Activated naive CD4-positive, alpha-beta T cell treated with anti-CD3 and anti-CD28 coated beads, Interleukin-2, amount 10 ng/mL, durations not matched to agents 7 days and 5 days (primary cell): ENCODE measurements at regions of chr20 and their contacts with region 1.

Region 1: DNA sequence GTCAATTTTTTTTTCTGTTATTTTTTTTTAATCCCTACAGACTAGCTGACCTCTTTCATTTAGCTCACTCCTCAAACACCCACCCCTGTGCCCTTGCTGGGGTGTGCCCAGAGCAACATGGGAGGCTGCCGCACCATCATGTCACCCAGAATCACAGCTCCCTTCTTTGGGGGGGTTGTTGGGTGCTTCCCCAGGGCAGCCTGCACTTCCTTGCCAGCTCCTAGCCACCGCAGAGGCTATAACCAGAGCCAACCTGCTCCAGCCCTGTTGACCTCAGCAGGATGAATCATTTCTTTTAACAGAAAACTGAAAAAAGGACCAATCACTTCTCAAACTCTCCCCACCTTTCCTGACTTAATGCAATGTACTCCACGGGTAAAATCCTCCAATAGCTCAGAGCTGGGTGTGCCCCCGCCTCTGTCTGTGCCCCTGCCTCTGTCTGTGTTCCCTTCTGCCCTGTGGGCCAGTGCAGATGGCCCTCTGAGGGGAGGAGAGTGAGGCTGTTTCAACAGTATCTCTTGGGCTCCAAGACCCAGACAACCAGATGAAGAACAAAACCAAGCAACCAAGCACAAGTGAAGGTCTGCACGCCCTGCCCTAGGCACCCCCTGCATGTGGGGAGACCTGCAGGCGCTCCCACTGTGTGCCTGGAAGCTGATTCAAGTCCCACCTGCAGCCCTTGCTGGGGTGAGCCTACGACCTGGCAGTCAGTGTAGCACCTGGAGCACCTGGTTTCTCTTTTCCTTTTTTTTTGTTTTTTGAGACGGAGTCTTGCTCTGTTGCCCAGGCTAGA is 67.7 kb downstream of the PYGB start:
- DNase-seq: no peak
- H3K4me3 Mint-ChIP-seq: no peak overlapping the region
- H3K27ac Mint-ChIP-seq: no peak overlapping the region
- H3K4me1 Mint-ChIP-seq: peaks cover 35% of the 10 kb centered on the region
- H3K27me3 Mint-ChIP-seq: no peaks in the 10 kb centered on the region

Region 2: GRCh38 chr20:25081065-25081729 is 234.4 kb before region 1 on chr20:
- CTCF ChIA-PET with region 1: no interaction called
- DNase-seq: peak; percentile 73
- H3K4me3 Mint-ChIP-seq: no peak overlapping the region
- H3K27ac Mint-ChIP-seq: no peak overlapping the region
- H3K4me1 Mint-ChIP-seq: peaks cover 16% of the 10 kb centered on the region
- H3K27me3 Mint-ChIP-seq: peaks cover 96% of the 10 kb centered on the region

Region 3: DNA sequence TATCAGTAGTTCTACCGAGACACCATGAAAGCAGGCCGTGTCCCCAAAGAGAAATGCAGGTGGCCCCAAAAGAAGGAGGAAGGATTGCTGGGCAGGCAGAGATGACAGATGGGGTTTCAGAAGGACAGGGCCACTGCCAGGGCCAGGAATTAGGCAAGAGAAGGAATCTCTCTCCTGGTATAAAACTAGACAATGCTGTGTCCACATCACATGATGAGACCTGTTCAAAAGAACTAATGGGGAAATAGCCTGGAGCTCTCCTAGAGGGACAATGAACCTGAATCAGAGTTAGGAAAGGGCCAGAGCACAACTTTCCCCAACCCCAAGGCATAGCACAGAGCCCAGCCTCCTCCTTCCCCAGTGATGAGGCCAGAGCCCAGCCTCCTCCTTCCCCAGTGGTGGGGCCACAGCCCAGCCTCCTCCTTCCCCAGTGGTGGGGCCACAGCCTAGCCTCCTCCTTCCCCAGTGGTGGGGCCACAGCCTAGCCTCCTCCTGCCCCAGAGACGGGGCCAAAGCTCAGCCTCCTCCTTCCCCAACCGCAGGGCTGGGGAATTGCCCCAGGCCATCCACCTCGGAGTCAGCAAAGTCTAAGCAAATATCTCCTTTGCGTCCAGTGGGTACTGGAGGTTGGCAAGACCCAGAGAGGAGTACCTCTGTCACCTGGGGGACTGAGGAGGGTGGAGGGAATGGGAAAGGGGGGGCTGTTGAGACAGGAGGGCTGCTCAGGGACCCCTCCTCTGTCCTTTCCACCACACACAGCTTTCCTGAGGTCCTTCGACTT is 211.9 kb before region 1 on chr20:
- CTCF ChIA-PET with region 1: no interaction called
- DNase-seq: no peak
- H3K4me3 Mint-ChIP-seq: no peak overlapping the region
- H3K27ac Mint-ChIP-seq: no peak overlapping the region
- H3K4me1 Mint-ChIP-seq: no peaks in the 10 kb centered on the region
- H3K27me3 Mint-ChIP-seq: peaks cover 22% of the 10 kb centered on the region

Region 4: DNA sequence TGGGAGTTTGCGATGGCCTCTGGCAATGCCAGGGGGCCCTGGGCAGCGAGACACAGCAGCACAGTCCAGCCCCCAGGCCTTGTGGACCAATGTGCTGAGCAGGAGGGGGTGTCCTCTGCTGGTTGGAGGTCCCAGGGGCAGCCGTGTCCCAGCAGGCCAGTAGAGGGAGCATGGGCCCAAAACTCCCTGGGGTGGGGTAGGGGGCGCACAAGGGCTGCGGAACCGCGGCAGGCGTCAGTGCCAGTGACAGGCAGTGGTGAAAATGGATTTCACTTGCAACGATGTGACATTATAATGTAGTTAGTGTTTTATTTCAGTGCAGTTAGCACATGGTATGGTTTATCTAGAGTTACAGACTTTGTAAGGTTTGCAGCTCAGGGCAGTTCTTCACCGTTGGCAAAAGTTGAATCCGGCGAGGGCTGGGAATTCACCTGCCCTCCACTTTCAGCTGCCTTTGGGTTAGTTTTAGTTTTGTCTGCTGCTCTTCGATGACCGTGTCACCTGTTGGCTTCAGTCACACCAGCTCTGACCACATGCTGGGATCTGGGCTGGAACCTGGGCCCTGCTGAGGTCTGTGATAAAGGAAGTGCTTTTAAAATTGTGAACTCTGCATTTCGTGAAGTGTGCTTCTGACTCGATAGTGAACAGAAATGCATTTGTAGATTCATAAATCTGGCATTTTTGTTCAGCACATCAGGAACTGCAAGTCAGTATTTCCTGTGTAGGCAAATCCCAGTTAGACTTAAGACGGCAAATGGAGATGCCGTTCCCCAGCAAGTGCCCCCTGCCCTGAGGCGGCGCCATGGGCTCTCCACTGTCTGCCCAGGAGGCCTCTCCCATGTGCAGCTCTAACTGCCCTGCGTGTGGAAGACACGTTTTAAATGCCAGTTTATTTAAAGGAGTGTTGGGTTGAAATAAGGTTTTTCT is 20.9 kb before region 1 on chr20:
- CTCF ChIA-PET with region 1: interaction called, 10 read pairs
- DNase-seq: peak; percentile 70
- H3K4me3 Mint-ChIP-seq: no peak overlapping the region
- H3K27ac Mint-ChIP-seq: no peak overlapping the region
- H3K4me1 Mint-ChIP-seq: peaks cover 4% of the 10 kb centered on the region
- H3K27me3 Mint-ChIP-seq: no peaks in the 10 kb centered on the region

Region 5: GRCh38 chr20:25407311-25408169 is 91.9 kb after region 1 on chr20 and contains the start of gene GINS1:
- CTCF ChIA-PET with region 1: no interaction called
- DNase-seq: peak; percentile 88
- H3K4me3 Mint-ChIP-seq: peak within 1 kb of the TSS; percentile 93
- H3K27ac Mint-ChIP-seq: peak within 1 kb of the TSS; percentile 90
- H3K4me1 Mint-ChIP-seq: peaks cover 25% of the 10 kb centered on the region
- H3K27me3 Mint-ChIP-seq: peaks cover 2% of the 10 kb centered on the region

Region 6: DNA sequence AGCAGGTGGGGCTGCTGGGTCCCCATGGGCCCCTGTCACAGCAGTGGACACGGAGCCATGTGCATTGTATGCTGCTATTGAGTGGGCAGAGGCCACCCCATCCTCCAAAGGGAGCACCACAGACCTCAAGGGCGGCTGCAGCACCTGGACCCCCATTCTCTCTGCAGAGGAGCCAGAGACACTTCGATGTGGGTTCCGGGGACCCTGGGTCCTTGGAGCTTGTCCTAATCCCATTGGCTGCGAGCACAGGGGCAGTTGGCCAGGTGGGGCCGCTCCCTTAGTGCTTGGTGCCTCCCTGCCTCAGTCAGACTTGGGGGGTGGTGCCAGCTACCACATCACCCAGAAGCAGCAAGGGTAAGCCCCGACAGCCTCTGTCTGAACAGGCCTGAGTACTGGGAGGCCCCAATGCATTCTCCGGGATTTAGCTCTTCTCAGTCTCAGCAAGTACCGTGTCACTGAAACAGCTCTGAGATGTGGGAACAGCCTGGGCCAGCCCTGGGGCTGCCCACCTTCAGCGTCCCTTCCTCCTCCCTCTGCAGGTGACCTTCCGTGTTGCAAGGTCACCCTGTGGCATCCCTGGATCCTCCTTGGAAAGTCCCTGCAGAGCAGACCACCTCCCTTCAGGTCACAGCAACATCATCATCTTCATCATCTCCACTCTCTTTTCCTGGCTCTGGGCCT is 165.8 kb after region 1 on chr20:
- CTCF ChIA-PET with region 1: no interaction called
- DNase-seq: no peak
- H3K4me3 Mint-ChIP-seq: no peak overlapping the region
- H3K27ac Mint-ChIP-seq: no peak overlapping the region
- H3K4me1 Mint-ChIP-seq: peaks cover 22% of the 10 kb centered on the region
- H3K27me3 Mint-ChIP-seq: peaks cover 4% of the 10 kb centered on the region